Activated T-helper 2 cell treated with anti-CD3 and anti-CD28 coated beads, Interferon-gamma antibody, Interleukin-2, Interleukin-4, amounts not matched to agents 10 μg/mL and 5 μg/mL and 100 μg/mL, durations not matched to agents 14 hours and 24 hours and 36 hours (primary cell): ENCODE measurements at regions of chr17 and their contacts with region 1.

Region 1: DNA sequence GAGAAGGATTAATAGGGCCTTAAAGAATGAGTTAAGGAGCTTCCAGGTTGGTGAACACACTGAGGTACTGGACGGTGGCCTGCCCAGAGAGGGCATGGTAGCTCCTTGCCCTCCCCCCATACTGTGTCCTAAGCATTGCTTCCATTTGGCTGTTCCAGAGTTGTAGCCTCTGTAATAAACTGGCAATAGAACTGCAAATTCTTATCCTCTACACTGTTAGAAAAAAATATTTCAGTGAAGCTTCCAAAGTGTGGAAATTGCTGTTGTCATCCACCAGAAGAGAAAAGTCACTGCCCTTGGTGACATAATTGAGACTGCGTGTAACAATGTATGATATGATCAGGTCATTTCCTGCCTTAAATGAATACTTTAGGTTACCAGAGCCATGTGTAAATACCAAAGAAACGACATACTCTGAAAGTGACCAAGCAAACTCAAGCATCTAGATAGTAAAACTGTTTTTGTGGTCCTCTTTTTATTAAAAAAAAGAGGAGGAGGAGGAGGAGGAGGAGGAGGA is 65.9 kb downstream of the CEP95 start:
- DNase-seq: no peak
- H3K4me3 Mint-ChIP-seq: peak overlapping the region; percentile 42
- H3K27ac Mint-ChIP-seq: peak overlapping the region; percentile 87
- H3K4me1 Mint-ChIP-seq: peaks cover 11% of the 10 kb centered on the region
- H3K27me3 Mint-ChIP-seq: no peaks in the 10 kb centered on the region

Region 2: GRCh38 chr17:64599187-64599676 is 26.5 kb after region 1 on chr17:
- intact Hi-C with region 1: loop called (anchors 2 kb)
- DNase-seq: peak; percentile 52
- H3K4me3 Mint-ChIP-seq: peak overlapping the region; percentile 66
- H3K27ac Mint-ChIP-seq: peak overlapping the region; percentile 79
- H3K4me1 Mint-ChIP-seq: peaks cover 35% of the 10 kb centered on the region
- H3K27me3 Mint-ChIP-seq: no peaks in the 10 kb centered on the region

Region 3: GRCh38 chr17:64635647-64636307 is 63.1 kb after region 1 on chr17:
- intact Hi-C with region 1: loop called (anchors 1 kb)
- DNase-seq: no peak
- H3K4me3 Mint-ChIP-seq: no peak overlapping the region
- H3K27ac Mint-ChIP-seq: peak overlapping the region; percentile 96
- H3K4me1 Mint-ChIP-seq: peaks cover 40% of the 10 kb centered on the region
- H3K27me3 Mint-ChIP-seq: no peaks in the 10 kb centered on the region